Activated CD4-positive, alpha-beta T cell treated with anti-CD3 and anti-CD28 coated beads, Interleukin-2, amount 10 ng/mL, durations not matched to agents 7 days and 5 days (primary cell): ENCODE measurements at regions of chr3 and their contacts with region 1.

Region 1: DNA sequence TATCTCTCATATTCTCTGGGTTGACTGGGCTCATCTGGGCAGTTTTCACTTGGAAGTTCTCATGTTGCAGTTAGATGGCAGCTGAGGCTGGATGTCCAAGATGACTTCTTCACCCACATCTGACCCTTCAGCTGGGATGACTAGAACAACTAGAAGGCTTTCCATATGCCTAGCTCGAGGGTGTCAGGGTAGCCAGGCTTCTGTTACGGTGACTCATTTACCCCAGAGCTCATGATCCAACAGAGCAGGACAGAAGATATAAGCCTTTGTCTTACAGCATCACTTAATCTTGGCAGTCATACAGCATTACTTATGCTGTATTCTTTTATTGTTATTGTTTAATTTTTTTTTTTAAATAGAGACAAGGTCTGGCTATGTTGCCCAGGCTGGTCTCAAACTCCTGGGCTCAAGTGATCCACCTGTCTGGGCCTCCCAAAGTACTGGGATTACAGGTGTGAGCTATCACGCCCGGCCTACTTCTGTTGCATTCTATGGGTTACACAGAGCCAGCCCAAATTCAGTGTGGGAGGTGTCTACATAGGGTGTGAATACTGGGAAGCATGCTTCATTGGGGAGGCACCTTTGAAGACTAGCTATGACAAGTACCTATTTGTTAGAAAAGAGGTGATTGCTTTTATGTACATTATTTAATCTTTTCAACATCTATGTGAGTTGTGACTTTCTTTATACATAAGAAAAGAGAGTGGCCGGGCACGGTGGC is 10.7 kb downstream of the HMCES start:
- DNase-seq: no peak
- H3K4me3 Mint-ChIP-seq: no peak overlapping the region
- H3K27ac Mint-ChIP-seq: no peak overlapping the region
- H3K4me1 Mint-ChIP-seq: peaks cover 5% of the 10 kb centered on the region
- H3K27me3 Mint-ChIP-seq: no peaks in the 10 kb centered on the region

Region 2: DNA sequence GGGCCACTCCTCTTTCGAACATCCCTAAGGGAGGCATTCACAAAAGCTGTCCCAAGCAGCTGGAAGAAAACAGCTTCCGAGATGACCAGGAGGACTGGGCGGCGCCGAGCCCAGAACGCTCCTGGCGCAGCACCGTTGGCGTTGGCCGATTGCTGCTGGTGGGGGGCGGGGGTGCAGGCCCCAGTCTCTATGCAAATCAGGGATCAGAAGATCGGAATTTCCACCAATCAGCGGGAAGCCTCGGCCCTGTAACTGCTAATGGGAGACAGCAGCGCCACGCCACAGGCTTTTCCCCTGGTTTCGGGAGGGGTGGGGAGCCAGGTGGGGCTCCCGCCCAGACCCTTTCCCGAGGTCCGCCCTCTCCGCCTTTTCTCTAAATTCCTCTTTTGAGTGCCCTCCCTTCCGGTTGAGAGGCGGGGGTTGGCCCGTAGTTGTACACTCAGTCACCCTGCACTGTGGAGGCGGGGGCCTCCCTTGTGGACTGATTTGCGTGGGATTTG is 16.3 kb after region 1 on chr3:
- CTCF ChIA-PET with region 1: interaction called, 11 read pairs
- POLR2A ChIA-PET with region 1: no interaction called
- DNase-seq: no peak
- H3K4me3 Mint-ChIP-seq: no peak overlapping the region
- H3K27ac Mint-ChIP-seq: no peak overlapping the region
- H3K4me1 Mint-ChIP-seq: peaks cover 35% of the 10 kb centered on the region
- H3K27me3 Mint-ChIP-seq: no peaks in the 10 kb centered on the region